ENCODE measurements at regions of chr3 and their contacts with region 1.

Region 1: GRCh38 chr3:173538410-173538809 is 140.9 kb downstream of the NLGN1 start:
- H3K4me3 ChIP-seq: no peak overlapping the region
- H3K27ac ChIP-seq: no peak overlapping the region
- H3K4me1 ChIP-seq: no peaks in the 10 kb centered on the region
- CTCF ChIP-seq: no peak

Region 2: GRCh38 chr3:173371848-173372487 is 166.4 kb before region 1 on chr3:
- CTCF ChIA-PET with region 1: no interaction called
- POLR2A ChIA-PET with region 1: no interaction called
- H3K4me3 ChIP-seq: no peak overlapping the region
- H3K27ac ChIP-seq: no peak overlapping the region
- H3K4me1 ChIP-seq: no peaks in the 10 kb centered on the region
- CTCF ChIP-seq: no peak; the same call in 1 of the 2 replicates

Region 3: DNA sequence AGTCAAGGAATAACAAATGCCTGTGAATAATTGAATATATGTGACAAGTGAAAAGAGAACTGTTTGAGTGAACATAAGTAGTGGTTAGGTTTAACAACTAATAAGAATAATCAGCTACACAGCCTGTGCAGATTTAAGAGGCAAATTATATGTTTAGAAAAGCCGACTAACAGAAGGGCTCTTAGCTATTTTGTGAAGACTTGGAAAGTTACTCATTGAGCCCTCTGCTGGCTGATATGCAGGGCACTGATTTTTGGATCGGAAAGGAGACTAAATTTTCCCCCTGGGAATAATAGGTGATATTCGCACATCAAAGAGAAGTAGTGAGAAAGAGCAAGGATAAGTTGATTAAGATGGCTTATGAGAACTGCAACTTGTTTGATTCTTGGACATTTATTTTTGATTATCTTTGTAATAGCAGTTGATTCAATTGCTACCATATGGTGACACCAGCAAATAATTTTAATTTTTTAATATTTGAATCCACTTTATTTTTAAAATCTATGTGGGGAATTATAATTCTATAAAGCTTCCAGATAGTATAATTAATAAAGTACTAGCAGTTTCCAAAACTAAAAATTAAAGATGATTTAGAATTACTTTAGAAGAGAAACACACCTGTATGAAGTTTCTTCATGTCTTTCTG is 15.3 kb after region 1 on chr3:
- CTCF ChIA-PET with region 1: interaction called, 14 read pairs
- POLR2A ChIA-PET with region 1: no interaction called
- H3K4me3 ChIP-seq: no peak overlapping the region
- H3K27ac ChIP-seq: no peak overlapping the region
- H3K4me1 ChIP-seq: no peaks in the 10 kb centered on the region
- CTCF ChIP-seq: no peak

Measured in HEK293 (cell line).